GM12878 (cell line): ENCODE measurements at regions of chr4 and their contacts with region 1.

Region 1: DNA sequence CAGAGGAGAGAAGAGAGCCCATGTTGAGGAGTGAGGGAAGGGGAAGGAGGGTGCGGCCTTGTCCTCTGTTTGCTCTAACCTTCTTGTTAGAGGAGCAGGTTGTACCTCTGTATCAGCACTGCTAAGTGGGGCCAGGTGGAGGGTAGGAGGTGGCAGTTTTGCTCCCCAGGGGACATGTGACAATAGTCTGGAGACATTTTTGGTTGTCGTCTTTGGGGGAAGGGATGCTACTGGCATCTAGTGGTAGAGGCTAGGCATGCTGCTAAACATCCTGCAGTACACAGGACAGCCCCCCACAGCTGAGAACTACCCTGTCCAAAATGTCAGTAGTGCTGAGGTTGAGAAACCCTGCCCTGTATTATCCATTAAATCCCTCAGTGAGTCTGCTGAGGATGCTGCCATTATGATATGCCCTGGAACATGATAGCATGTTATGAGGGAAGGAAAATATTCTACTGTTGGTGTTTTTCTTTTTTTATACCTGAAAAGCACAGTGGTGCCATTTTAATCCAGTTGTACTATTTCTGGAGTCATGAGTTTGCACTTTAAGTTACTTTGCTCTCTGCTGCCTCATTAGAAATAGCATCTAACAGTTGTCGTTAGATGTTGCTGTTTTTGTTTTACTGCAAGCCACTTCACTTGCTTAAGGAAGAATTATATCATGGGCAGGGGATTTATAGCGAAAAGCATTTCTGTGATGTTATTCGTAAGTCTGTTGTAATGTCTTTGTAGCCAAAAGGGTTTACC is 90.6 kb downstream of the LRP2BP start:
- DNase-seq: peak; percentile 68
- ATAC-seq: peak; percentile 73
- H3K4me3 ChIP-seq: no peak overlapping the region
- H3K27ac ChIP-seq: peak overlapping the region; percentile 99
- H3K4me1 ChIP-seq: peaks cover 59% of the 10 kb centered on the region
- H3K27me3 ChIP-seq: no peaks in the 10 kb centered on the region
- CTCF ChIP-seq: peak; percentile 70 to 79 (median 73)
- EP300 ChIP-seq: no peak
- POLR2A ChIP-seq: no peak
- RAD21 ChIP-seq: peak; percentile 83

Region 2: GRCh38 chr4:184845367-184846021 is 459.6 kb before region 1 on chr4:
- CTCF ChIA-PET with region 1: no interaction called
- POLR2A ChIA-PET with region 1: no interaction called
- RAD21 ChIA-PET with region 1: no interaction called
- SMC1A ChIA-PET with region 1: no interaction called
- in situ Hi-C with region 1: no loop called
- intact Hi-C with region 1: no loop called
- DNase-seq: no peak
- ATAC-seq: peak; percentile 68
- H3K4me3 ChIP-seq: no peak overlapping the region
- H3K27ac ChIP-seq: no peak overlapping the region
- H3K4me1 ChIP-seq: peaks cover 28% of the 10 kb centered on the region
- H3K27me3 ChIP-seq: no peaks in the 10 kb centered on the region
- CTCF ChIP-seq: no peak
- EP300 ChIP-seq: peak; percentile 56 to 64; a peak in 2 of 4 replicates
- POLR2A ChIP-seq: no peak
- RAD21 ChIP-seq: no peak

Region 3: GRCh38 chr4:185134307-185134869 is 170.7 kb before region 1 on chr4:
- CTCF ChIA-PET with region 1: interaction called, 17 read pairs
- POLR2A ChIA-PET with region 1: no interaction called
- RAD21 ChIA-PET with region 1: interaction called, 5 read pairs
- SMC1A ChIA-PET with region 1: interaction called, 16 read pairs
- in situ Hi-C with region 1: no loop called
- intact Hi-C with region 1: loop called (anchors 2 kb)
- DNase-seq: no peak
- ATAC-seq: peak; percentile 91
- H3K4me3 ChIP-seq: no peak overlapping the region
- H3K27ac ChIP-seq: no peak overlapping the region
- H3K4me1 ChIP-seq: no peaks in the 10 kb centered on the region
- H3K27me3 ChIP-seq: no peaks in the 10 kb centered on the region; a peak in 1 of 4 replicates
- CTCF ChIP-seq: peak; percentile 69 to 83 (median 81)
- EP300 ChIP-seq: no peak
- POLR2A ChIP-seq: no peak
- RAD21 ChIP-seq: peak; percentile 79

Region 4: DNA sequence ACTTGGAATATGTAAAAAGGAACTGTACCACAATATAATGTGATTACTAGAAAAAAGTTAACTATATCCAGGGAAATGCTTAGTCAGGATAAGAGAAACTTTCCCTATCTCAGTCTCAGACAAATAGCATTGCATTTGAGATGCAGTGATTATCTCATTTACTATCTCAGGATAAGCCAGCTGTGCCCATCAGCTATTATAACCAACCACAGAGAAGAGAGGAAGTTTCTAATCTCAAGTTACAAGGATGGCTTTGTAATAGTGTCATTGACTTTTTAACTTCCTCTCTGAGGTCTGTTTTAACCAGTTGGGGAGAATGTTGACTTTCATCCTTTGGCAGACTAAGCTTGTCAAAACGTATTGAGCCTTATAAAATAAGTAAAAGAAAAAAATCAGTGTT is 39.2 kb before region 1 on chr4:
- CTCF ChIA-PET with region 1: interaction called, 8 read pairs
- POLR2A ChIA-PET with region 1: interaction called, 3 read pairs
- RAD21 ChIA-PET with region 1: interaction called, 11 read pairs
- SMC1A ChIA-PET with region 1: interaction called, 13 read pairs
- in situ Hi-C with region 1: no loop called
- intact Hi-C with region 1: no loop called
- DNase-seq: peak; percentile 35
- ATAC-seq: peak; percentile 91
- H3K4me3 ChIP-seq: no peak overlapping the region
- H3K27ac ChIP-seq: peak overlapping the region; percentile 2; the same call in 1 of the 2 replicates
- H3K4me1 ChIP-seq: peaks cover 38% of the 10 kb centered on the region
- H3K27me3 ChIP-seq: no peaks in the 10 kb centered on the region
- CTCF ChIP-seq: no peak
- EP300 ChIP-seq: no peak
- POLR2A ChIP-seq: no peak
- RAD21 ChIP-seq: no peak

Region 5: DNA sequence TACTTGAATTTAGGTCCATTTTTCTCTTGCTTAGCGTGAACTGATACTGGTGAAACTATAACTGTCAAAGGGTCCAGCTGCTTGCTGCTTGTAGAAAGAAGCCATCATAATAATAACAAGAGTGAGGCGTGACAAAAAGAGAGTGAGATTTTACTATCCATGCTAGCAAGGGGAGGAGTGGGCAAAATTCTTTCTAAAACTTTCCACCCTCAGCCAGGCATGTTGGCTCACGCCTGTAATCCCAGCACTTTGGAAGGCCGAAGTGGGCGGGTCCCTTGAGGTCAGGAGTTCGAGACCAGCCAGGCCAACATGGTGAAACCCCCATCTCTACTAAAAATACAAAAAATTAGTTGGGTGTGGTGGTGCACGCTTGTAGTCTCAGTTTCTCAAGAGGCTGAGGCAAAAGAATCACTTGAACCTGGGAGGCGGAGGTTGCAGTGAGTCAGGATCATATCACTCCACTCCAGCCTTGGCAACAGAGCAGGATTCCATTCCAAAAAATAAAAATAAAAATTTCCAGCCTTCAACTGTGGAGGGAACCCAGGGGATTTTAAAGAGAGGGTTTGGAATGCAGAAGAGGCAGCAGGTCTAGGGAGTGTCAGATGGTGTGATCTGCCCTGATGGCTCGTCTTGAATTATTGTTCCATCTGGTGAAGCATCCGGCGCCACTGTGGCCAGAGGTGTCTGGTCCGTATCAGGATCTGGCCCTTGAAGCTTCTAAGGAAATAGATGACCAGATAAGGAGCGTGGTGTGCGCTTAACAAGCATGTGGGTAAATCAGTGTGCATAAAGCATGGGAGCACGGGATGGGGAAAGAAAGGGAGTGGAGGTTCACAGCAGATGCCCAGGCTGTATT is 38.8 kb after region 1 on chr4:
- CTCF ChIA-PET with region 1: interaction called, 20 read pairs
- POLR2A ChIA-PET with region 1: interaction called, 91 read pairs
- RAD21 ChIA-PET with region 1: interaction called, 69 read pairs
- SMC1A ChIA-PET with region 1: interaction called, 131 read pairs
- in situ Hi-C with region 1: no loop called
- intact Hi-C with region 1: loop called (anchors 1 kb)
- DNase-seq: no peak
- ATAC-seq: peak; percentile 48
- H3K4me3 ChIP-seq: no peak overlapping the region
- H3K27ac ChIP-seq: peak overlapping the region; percentile 97
- H3K4me1 ChIP-seq: peaks cover 65% of the 10 kb centered on the region
- H3K27me3 ChIP-seq: no peaks in the 10 kb centered on the region
- CTCF ChIP-seq: no peak
- EP300 ChIP-seq: peak; percentile 26 to 51; a peak in 1 of 4 replicates
- POLR2A ChIP-seq: peak; percentile 49; the same call in 1 of the 2 replicates
- RAD21 ChIP-seq: no peak

Region 6: GRCh38 chr4:185395956-185396723 is 91.0 kb after region 1 on chr4:
- CTCF ChIA-PET with region 1: interaction called, 4 read pairs
- POLR2A ChIA-PET with region 1: interaction called, 60 read pairs
- RAD21 ChIA-PET with region 1: interaction called, 26 read pairs
- SMC1A ChIA-PET with region 1: interaction called, 72 read pairs
- in situ Hi-C with region 1: no loop called
- intact Hi-C with region 1: loop called (anchors 2 kb)
- DNase-seq: peak; percentile 97
- ATAC-seq: peak; percentile 91
- H3K4me3 ChIP-seq: peak overlapping the region; percentile 79
- H3K27ac ChIP-seq: peak overlapping the region; percentile 97
- H3K4me1 ChIP-seq: peaks cover 19% of the 10 kb centered on the region
- H3K27me3 ChIP-seq: no peaks in the 10 kb centered on the region
- CTCF ChIP-seq: no peak
- EP300 ChIP-seq: 0 out of 4 replicates have a peak, but pooled peaks of 1 of the 2 experiments have one; percentile 55
- POLR2A ChIP-seq: peak; percentile 86
- RAD21 ChIP-seq: no peak